GM12878 (cell line): ENCODE measurements at regions of chr4 and their contacts with region 1.

Region 1: DNA sequence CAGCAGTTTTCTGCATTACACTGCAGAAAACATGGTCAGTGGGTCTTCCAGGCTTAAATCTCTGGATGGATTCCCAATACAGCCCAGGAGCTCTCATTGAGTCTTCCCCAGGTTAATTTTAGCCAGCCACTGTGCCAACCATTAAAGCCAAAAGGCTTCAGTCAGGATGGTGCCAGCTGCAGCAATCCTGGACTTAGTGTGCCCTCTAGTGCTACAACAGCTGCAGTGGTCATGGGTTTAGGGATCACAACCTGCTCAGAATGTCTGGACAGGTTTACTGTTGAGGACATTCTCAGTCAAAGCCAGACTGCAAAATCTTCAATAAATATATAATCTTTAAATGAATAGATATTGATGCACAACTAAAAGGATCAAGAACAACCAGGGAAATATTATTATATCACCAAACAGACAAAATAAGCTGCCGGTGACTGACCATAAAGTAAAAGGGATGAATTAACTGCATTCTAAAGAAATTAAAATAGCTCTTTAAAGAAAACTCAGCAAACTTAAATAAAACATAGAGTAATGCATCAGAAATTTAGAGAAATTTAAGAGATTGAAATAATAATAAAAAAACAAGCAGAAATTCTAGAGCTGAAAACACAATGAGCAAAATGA is 639.9 kb downstream of the SPOCK3 start:
- DNase-seq: peak; percentile 13
- ATAC-seq: peak; percentile 100
- H3K4me3 ChIP-seq: no peak overlapping the region
- H3K27ac ChIP-seq: no peak overlapping the region
- H3K4me1 ChIP-seq: no peaks in the 10 kb centered on the region
- H3K27me3 ChIP-seq: no peaks in the 10 kb centered on the region
- CTCF ChIP-seq: peak; percentile 57 to 73 (median 71)
- EP300 ChIP-seq: no peak
- POLR2A ChIP-seq: no peak
- RAD21 ChIP-seq: peak; percentile 83

Region 2: DNA sequence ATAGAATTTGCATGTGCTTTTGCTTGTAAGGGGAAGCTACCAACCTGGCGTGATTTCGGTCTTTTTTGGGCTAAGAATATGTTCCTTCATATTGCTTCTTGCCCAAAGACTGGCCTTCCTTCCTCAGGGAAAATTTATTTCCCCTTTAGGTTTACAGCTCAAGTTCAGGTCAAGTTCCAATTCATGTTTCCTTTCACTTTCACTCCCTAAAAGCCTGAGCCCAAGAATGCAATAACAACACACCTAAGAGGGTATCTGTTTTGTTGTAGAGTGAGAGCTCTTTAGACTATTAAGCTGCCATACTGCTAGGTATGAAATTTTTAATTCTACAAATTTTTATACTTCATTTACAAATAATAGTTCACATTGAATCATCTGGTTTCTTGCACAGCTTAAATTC is 421.8 kb before region 1 on chr4:
- CTCF ChIA-PET with region 1: interaction called, 12 read pairs
- POLR2A ChIA-PET with region 1: no interaction called
- RAD21 ChIA-PET with region 1: interaction called, 9 read pairs
- SMC1A ChIA-PET with region 1: interaction called, 9 read pairs
- in situ Hi-C with region 1: loop called (anchors 5 kb)
- intact Hi-C with region 1: no loop called
- DNase-seq: no peak
- ATAC-seq: peak; percentile 38; the same call in 2 of the 3 replicates
- H3K4me3 ChIP-seq: no peak overlapping the region
- H3K27ac ChIP-seq: no peak overlapping the region
- H3K4me1 ChIP-seq: no peaks in the 10 kb centered on the region
- H3K27me3 ChIP-seq: no peaks in the 10 kb centered on the region
- CTCF ChIP-seq: no peak
- EP300 ChIP-seq: no peak
- POLR2A ChIP-seq: no peak
- RAD21 ChIP-seq: no peak

Region 3: GRCh38 chr4:166501941-166502382 is 92.5 kb before region 1 on chr4:
- CTCF ChIA-PET with region 1: no interaction called
- POLR2A ChIA-PET with region 1: no interaction called
- RAD21 ChIA-PET with region 1: no interaction called
- SMC1A ChIA-PET with region 1: no interaction called
- in situ Hi-C with region 1: no loop called
- intact Hi-C with region 1: no loop called
- DNase-seq: no peak
- ATAC-seq: no peak
- H3K4me3 ChIP-seq: no peak overlapping the region
- H3K27ac ChIP-seq: no peak overlapping the region
- H3K4me1 ChIP-seq: no peaks in the 10 kb centered on the region
- H3K27me3 ChIP-seq: no peaks in the 10 kb centered on the region
- CTCF ChIP-seq: peak in 2 of 3 experiments; percentile 14 to 18; a peak in 3 of 6 replicates
- EP300 ChIP-seq: no peak
- POLR2A ChIP-seq: no peak
- RAD21 ChIP-seq: peak; percentile 47

Region 4: GRCh38 chr4:166577639-166578038 is 16.8 kb before region 1 on chr4:
- CTCF ChIA-PET with region 1: interaction called, 15 read pairs
- POLR2A ChIA-PET with region 1: no interaction called
- RAD21 ChIA-PET with region 1: no interaction called
- SMC1A ChIA-PET with region 1: interaction called, 13 read pairs
- in situ Hi-C with region 1: no loop called
- intact Hi-C with region 1: no loop called
- DNase-seq: no peak
- ATAC-seq: no peak
- H3K4me3 ChIP-seq: no peak overlapping the region
- H3K27ac ChIP-seq: no peak overlapping the region
- H3K4me1 ChIP-seq: no peaks in the 10 kb centered on the region
- H3K27me3 ChIP-seq: no peaks in the 10 kb centered on the region
- CTCF ChIP-seq: no peak
- EP300 ChIP-seq: no peak
- POLR2A ChIP-seq: no peak
- RAD21 ChIP-seq: no peak

Region 5: DNA sequence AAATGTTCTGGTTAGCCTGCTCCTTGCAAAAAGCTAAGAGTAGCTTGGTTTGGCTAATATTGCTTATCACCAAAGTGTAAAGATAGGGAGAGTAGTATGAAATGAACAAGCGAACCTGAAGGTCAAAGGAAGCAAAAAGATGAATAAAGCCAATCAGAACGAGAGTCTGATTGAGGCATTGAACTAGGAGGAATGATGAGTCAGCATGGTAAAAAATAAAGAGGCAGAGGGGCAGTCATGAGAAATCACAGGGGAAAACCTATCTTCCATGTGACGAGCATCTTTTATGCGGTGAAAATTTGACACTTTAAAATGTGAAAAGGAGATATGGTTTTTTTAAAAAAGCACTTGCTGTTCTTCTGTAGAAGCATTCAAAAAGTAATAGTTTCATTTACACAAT is 106.2 kb after region 1 on chr4:
- CTCF ChIA-PET with region 1: no interaction called
- POLR2A ChIA-PET with region 1: no interaction called
- RAD21 ChIA-PET with region 1: no interaction called
- SMC1A ChIA-PET with region 1: no interaction called
- in situ Hi-C with region 1: no loop called
- intact Hi-C with region 1: no loop called
- DNase-seq: no peak
- ATAC-seq: no peak
- H3K4me3 ChIP-seq: no peak overlapping the region
- H3K27ac ChIP-seq: no peak overlapping the region
- H3K4me1 ChIP-seq: no peaks in the 10 kb centered on the region
- H3K27me3 ChIP-seq: no peaks in the 10 kb centered on the region
- CTCF ChIP-seq: no peak
- EP300 ChIP-seq: no peak
- POLR2A ChIP-seq: no peak
- RAD21 ChIP-seq: no peak

Region 6: DNA sequence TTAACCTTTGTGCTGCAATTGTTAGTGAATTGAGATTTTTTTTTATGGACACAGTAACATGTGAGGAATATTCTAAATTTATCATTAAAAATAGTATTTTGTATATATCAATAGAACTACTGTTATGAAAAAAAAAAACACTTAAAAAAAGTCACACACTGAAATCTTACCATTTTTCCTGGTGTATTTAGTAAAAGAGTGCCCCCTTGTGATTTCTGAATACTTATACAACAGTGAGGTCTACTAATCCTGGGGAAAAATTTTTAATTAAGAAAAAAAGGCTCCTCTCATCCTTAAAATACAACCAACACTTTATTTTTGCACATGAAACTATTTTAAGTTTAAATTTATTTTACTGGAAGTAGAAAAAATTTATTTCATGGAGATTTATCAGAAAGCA is 696.2 kb after region 1 on chr4:
- CTCF ChIA-PET with region 1: interaction called, 5 read pairs
- POLR2A ChIA-PET with region 1: no interaction called
- RAD21 ChIA-PET with region 1: no interaction called
- SMC1A ChIA-PET with region 1: interaction called, 3 read pairs
- in situ Hi-C with region 1: no loop called
- intact Hi-C with region 1: loop called (anchors 5 kb)
- DNase-seq: no peak
- ATAC-seq: peak; percentile 44; the same call in 2 of the 3 replicates
- H3K4me3 ChIP-seq: no peak overlapping the region
- H3K27ac ChIP-seq: no peak overlapping the region
- H3K4me1 ChIP-seq: no peaks in the 10 kb centered on the region
- H3K27me3 ChIP-seq: no peaks in the 10 kb centered on the region
- CTCF ChIP-seq: peak in 2 of 3 experiments; percentile 9 to 43; a peak in 1 of 6 replicates
- EP300 ChIP-seq: no peak
- POLR2A ChIP-seq: no peak
- RAD21 ChIP-seq: peak; percentile 66

Region 7: GRCh38 chr4:168076989-168077725 is 1482.7 kb after region 1 on chr4:
- CTCF ChIA-PET with region 1: no interaction called
- POLR2A ChIA-PET with region 1: no interaction called
- RAD21 ChIA-PET with region 1: no interaction called
- SMC1A ChIA-PET with region 1: no interaction called
- in situ Hi-C with region 1: no loop called
- intact Hi-C with region 1: loop called (anchors 10 kb)
- DNase-seq: peak; percentile 16
- ATAC-seq: peak; percentile 85
- H3K4me3 ChIP-seq: no peak overlapping the region
- H3K27ac ChIP-seq: no peak overlapping the region
- H3K4me1 ChIP-seq: no peaks in the 10 kb centered on the region
- H3K27me3 ChIP-seq: no peaks in the 10 kb centered on the region
- CTCF ChIP-seq: peak; percentile 80 to 91 (median 86)
- EP300 ChIP-seq: no peak
- POLR2A ChIP-seq: no peak
- RAD21 ChIP-seq: peak; percentile 92